ENCODE measurements at regions of chr4 and their contacts with region 1.

Region 1: DNA sequence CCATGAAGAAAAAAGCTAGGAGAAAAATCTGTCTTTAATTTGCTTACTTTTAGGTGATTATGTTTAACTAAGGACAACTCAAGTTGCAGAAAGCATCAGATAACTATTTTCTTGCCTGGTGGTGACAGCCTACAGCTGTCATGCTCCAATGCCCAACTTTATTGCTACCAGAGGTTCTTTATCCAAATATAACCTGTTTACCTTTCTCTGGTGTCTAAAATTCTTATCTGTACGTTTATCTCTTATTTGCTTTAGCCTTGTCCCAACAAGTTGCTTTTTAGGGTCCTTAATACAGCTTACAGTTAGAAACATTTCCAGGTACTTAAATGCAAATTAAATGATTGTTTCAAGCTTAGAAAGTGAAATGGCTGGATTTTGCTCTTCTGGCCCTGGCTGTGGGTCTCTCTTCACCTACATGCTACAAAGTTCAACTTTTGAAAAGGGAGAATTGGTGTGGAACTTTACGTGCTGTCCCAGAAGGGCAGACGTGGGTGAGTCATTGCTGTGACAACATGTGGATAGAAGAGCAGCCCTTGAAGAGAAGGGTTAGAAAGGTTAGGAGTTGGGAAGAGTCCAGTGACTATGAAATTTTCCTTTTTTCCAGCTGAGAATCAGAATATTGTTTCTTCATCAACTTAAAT is 60.7 kb downstream of the HPGD start:
- DNase-seq: peak; percentile 75 to 82
- H3K4me3 ChIP-seq: no peak overlapping the region
- H3K4me3 Mint-ChIP-seq: peak overlapping the region; percentile 54
- H3K27ac Mint-ChIP-seq: peak overlapping the region; percentile 58
- H3K4me1 ChIP-seq: peaks cover 50% of the 10 kb centered on the region
- H3K4me1 Mint-ChIP-seq: peaks cover 57% of the 10 kb centered on the region
- H3K27me3 ChIP-seq: no peaks in the 10 kb centered on the region
- H3K27me3 Mint-ChIP-seq: no peaks in the 10 kb centered on the region
- CTCF ChIP-seq: no peak

Region 2: GRCh38 chr4:173159791-173160190 is 1301.8 kb before region 1 on chr4:
- CTCF ChIA-PET with region 1: no interaction called
- POLR2A ChIA-PET with region 1: no interaction called
- intact Hi-C with region 1: no loop called
- DNase-seq: no peak
- H3K4me3 ChIP-seq: no peak overlapping the region
- H3K4me3 Mint-ChIP-seq: no peak overlapping the region
- H3K27ac Mint-ChIP-seq: no peak overlapping the region
- H3K4me1 ChIP-seq: no peaks in the 10 kb centered on the region
- H3K4me1 Mint-ChIP-seq: no peaks in the 10 kb centered on the region
- H3K27me3 ChIP-seq: no peaks in the 10 kb centered on the region
- H3K27me3 Mint-ChIP-seq: no peaks in the 10 kb centered on the region
- CTCF ChIP-seq: no peak

Region 3: GRCh38 chr4:174193438-174194374 is 267.9 kb before region 1 on chr4:
- CTCF ChIA-PET with region 1: no interaction called
- POLR2A ChIA-PET with region 1: no interaction called
- intact Hi-C with region 1: loop called (anchors 5 kb)
- DNase-seq: peak; percentile 47 to 56
- H3K4me3 ChIP-seq: no peak overlapping the region
- H3K4me3 Mint-ChIP-seq: peak overlapping the region; percentile 12
- H3K27ac Mint-ChIP-seq: peak overlapping the region; percentile 59
- H3K4me1 ChIP-seq: peaks cover 43% of the 10 kb centered on the region
- H3K4me1 Mint-ChIP-seq: peaks cover 8% of the 10 kb centered on the region
- H3K27me3 ChIP-seq: no peaks in the 10 kb centered on the region
- H3K27me3 Mint-ChIP-seq: no peaks in the 10 kb centered on the region
- CTCF ChIP-seq: no peak

Region 4: DNA sequence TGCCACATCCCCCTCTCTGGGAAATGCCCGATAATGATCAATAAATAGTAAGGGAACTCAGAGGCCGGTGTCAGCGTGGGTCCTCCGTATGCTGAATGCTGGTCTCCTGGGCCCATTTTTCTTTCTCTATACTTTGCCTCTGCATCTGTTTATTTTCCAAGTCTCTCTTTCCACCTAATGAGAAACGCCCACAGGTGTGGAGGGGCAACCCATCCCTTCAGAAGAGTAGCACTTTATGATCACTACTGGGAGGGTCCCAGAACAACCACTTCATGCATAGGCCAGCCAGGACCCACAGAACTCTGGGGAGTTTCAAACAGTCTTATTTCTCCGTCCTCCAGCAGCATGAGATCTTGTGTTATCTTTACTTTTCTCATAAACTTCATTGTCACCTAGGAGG is 77.8 kb before region 1 on chr4:
- CTCF ChIA-PET with region 1: no interaction called
- POLR2A ChIA-PET with region 1: no interaction called
- intact Hi-C with region 1: loop called (anchors 1 kb)
- DNase-seq: peak; percentile 59 to 60
- H3K4me3 ChIP-seq: no peak overlapping the region
- H3K4me3 Mint-ChIP-seq: peak overlapping the region; percentile 68
- H3K27ac Mint-ChIP-seq: peak overlapping the region; percentile 94
- H3K4me1 ChIP-seq: peaks cover 77% of the 10 kb centered on the region
- H3K4me1 Mint-ChIP-seq: peaks cover 28% of the 10 kb centered on the region
- H3K27me3 ChIP-seq: no peaks in the 10 kb centered on the region
- H3K27me3 Mint-ChIP-seq: no peaks in the 10 kb centered on the region
- CTCF ChIP-seq: no peak

Region 5: GRCh38 chr4:174402470-174403176 is 59.0 kb before region 1 on chr4:
- CTCF ChIA-PET with region 1: no interaction called
- POLR2A ChIA-PET with region 1: no interaction called
- intact Hi-C with region 1: loop called (anchors 1 kb)
- DNase-seq: peak in 1 of 2 experiments; percentile 11
- H3K4me3 ChIP-seq: no peak overlapping the region
- H3K4me3 Mint-ChIP-seq: peak overlapping the region; percentile 64
- H3K27ac Mint-ChIP-seq: peak overlapping the region; percentile 87
- H3K4me1 ChIP-seq: peaks cover 64% of the 10 kb centered on the region
- H3K4me1 Mint-ChIP-seq: peaks cover 38% of the 10 kb centered on the region
- H3K27me3 ChIP-seq: no peaks in the 10 kb centered on the region
- H3K27me3 Mint-ChIP-seq: no peaks in the 10 kb centered on the region
- CTCF ChIP-seq: no peak

Region 6: DNA sequence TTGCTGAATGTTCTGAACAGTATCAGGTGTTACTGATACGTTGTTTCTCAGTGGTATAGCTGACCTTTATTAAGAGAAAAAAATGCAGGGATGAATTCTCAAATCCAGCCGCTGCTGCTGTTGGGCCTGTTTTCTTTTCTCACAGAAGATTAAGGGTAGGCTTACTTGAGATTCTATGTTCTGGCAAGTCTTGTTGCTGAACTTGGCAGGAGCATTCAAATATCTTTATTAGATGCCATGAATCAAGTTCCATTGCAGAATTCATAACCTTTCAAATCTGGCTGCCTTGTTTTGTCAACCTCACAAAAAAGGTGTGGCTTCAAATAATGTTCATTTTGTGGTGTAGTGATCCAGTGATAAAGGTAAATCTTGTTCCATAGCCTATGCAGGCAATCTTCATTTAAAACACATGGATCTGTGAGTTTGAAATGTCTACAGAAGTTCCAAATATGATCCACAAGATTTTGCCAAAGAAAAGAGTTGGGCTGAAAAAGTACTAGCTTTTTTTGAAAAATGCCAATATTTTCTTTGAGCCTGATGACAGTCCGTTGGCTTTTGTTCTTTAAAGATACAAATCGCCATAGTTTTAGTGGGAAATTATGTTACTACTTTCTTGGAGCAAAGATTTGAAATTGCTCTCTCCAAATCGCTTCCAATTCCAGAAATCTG is 11.0 kb before region 1 on chr4:
- CTCF ChIA-PET with region 1: interaction called, 3 read pairs
- POLR2A ChIA-PET with region 1: no interaction called
- intact Hi-C with region 1: loop called (anchors 1 kb)
- DNase-seq: no peak
- H3K4me3 ChIP-seq: no peak overlapping the region
- H3K4me3 Mint-ChIP-seq: peak overlapping the region; percentile 15
- H3K27ac Mint-ChIP-seq: peak overlapping the region; percentile 73
- H3K4me1 ChIP-seq: peaks cover 56% of the 10 kb centered on the region
- H3K4me1 Mint-ChIP-seq: peaks cover 24% of the 10 kb centered on the region
- H3K27me3 ChIP-seq: no peaks in the 10 kb centered on the region
- H3K27me3 Mint-ChIP-seq: no peaks in the 10 kb centered on the region
- CTCF ChIP-seq: no peak

Region 7: GRCh38 chr4:174496631-174497432 is 35.2 kb after region 1 on chr4:
- CTCF ChIA-PET with region 1: no interaction called
- POLR2A ChIA-PET with region 1: no interaction called
- intact Hi-C with region 1: loop called (anchors 2 kb)
- DNase-seq: peak; percentile 19 to 64
- H3K4me3 ChIP-seq: no peak overlapping the region
- H3K4me3 Mint-ChIP-seq: peak overlapping the region; percentile 28
- H3K27ac Mint-ChIP-seq: peak overlapping the region; percentile 64
- H3K4me1 ChIP-seq: peaks cover 41% of the 10 kb centered on the region
- H3K4me1 Mint-ChIP-seq: peaks cover 24% of the 10 kb centered on the region
- H3K27me3 ChIP-seq: no peaks in the 10 kb centered on the region
- H3K27me3 Mint-ChIP-seq: no peaks in the 10 kb centered on the region
- CTCF ChIP-seq: no peak

Region 8: GRCh38 chr4:174631901-174632758 is 170.5 kb after region 1 on chr4:
- CTCF ChIA-PET with region 1: no interaction called
- POLR2A ChIA-PET with region 1: no interaction called
- intact Hi-C with region 1: loop called (anchors 2 kb)
- DNase-seq: peak in 1 of 2 experiments; percentile 44
- H3K4me3 ChIP-seq: no peak overlapping the region
- H3K4me3 Mint-ChIP-seq: no peak overlapping the region
- H3K27ac Mint-ChIP-seq: no peak overlapping the region
- H3K4me1 ChIP-seq: peaks cover 6% of the 10 kb centered on the region; the same call in 1 of the 2 replicates
- H3K4me1 Mint-ChIP-seq: peaks cover 6% of the 10 kb centered on the region
- H3K27me3 ChIP-seq: no peaks in the 10 kb centered on the region
- H3K27me3 Mint-ChIP-seq: no peaks in the 10 kb centered on the region
- CTCF ChIP-seq: peak; percentile 69 to 85

Measured in Caco-2 (cell line).